ENCODE measurements at regions of chr7 and their contacts with region 1.

Region 1: DNA sequence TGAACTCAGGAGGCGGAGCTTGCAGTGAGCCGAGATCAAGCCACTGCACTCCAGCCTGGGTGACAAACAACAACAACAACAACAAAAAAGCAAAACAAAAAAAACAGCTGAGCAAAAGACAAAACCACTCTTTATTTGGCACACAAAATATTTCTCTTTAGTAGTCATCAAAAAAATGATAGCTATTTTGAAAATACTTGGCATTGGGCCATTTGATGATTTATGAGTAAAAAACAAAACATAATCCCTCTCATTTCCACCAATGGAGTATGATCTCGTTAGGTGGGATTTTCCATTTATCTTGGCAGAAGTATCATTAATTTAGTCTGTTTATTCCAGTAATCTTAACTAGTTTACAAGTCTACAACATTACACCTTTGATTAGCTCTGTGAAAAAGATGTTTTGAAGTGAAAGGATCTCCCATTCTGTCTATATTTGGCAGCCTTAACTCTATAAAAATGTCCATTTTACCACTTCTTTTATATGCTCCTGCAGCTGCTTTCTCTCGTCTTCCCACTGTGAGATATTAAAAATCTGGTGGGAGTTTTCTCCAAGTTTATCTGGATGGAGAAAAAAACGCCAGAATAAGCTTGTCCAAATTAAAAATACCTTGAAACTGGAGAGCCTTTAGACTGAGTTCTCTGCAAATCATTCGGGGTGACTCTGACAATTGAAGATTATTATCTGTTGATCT is 58.8 kb upstream of the AGMO start:
- DNase-seq: no peak
- ATAC-seq: no peak
- H3K4me3 ChIP-seq: no peak overlapping the region
- H3K27ac ChIP-seq: peak overlapping the region in 3 of 12 donors; percentile 3 to 44 (median 22)
- H3K4me1 ChIP-seq: peaks cover 0 to 13% (median 0%) of the 10 kb centered on the region in 12 donors
- H3K27me3 ChIP-seq: no peaks in the 10 kb centered on the region
- CTCF ChIP-seq: no peak
- POLR2A ChIP-seq: no peak

Region 2: DNA sequence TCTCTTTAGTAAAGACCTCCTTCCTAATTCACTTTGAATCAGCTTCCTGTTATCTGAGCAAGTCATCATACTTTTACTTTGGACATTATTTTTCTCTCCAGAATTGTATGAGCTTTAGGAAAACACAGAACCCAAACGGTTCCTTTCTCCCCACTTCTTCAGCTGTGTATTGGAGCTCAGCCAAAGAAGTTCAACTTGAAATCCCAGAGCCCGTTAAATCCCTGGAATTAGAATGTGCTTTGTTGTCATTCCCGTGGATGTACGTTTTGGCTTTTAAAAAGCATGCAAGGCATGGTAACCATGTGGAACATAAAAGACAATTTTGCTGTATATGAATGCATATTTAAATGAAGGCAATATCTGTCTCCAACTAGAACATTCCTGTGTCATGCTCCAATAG is 105.4 kb before region 1 on chr7:
- intact Hi-C with region 1: no loop called
- DNase-seq: no peak
- ATAC-seq: no peak
- H3K4me3 ChIP-seq: peak overlapping the region in 5 of 12 donors; percentile 4 to 31 (median 16)
- H3K27ac ChIP-seq: peak overlapping the region in 8 of 12 donors; percentile 8 to 72 (median 30)
- H3K4me1 ChIP-seq: peaks cover 0 to 10% (median 0%) of the 10 kb centered on the region in 12 donors
- H3K27me3 ChIP-seq: no peaks in the 10 kb centered on the region
- CTCF ChIP-seq: no peak
- POLR2A ChIP-seq: no peak

Region 3: DNA sequence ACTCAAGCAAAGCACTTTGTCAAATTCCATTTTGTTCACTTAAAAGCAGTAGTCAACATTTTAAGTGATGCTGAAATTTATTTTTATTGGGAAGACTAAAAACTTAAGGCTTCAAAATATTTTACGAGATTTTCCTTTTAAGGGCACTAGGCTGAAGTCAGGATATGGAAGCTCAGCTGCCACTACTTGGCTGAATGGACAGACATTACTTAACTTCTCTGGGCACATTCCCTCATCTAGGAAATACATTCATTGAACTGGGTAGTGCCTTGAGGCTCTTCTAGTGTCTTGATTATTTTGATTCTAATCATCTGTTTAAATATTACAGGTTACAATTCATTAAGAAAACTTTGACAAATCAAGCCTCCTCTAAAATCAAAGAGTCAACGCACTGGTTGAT is 54.7 kb after region 1 on chr7:
- intact Hi-C with region 1: loop called in 1 of 10 experiments (anchors 5 kb)
- DNase-seq: no peak
- ATAC-seq: peak in 1 of 4 donors; percentile 61
- H3K4me3 ChIP-seq: no peak overlapping the region
- H3K27ac ChIP-seq: peak overlapping the region in 1 of 12 donors; percentile 14
- H3K4me1 ChIP-seq: peaks cover 0 to 39% (median 4%) of the 10 kb centered on the region in 12 donors
- H3K27me3 ChIP-seq: no peaks in the 10 kb centered on the region
- CTCF ChIP-seq: no peak
- POLR2A ChIP-seq: no peak

Measured in heart left ventricle (tissue), 16 donors.